Esophagus muscularis mucosa (tissue), 4 donors: ENCODE measurements at regions of chr5 and their contacts with region 1.

Region 1: GRCh38 chr5:172932313-172933017 is 26.8 kb upstream of the RPL26L1 start:
- DNase-seq: no peak
- H3K4me3 ChIP-seq: no peak overlapping the region
- H3K27ac ChIP-seq: peak overlapping the region; percentile 72 to 76 (median 74)
- H3K4me1 ChIP-seq: peaks cover 18 to 27% (median 25%) of the 10 kb centered on the region in 4 donors
- H3K27me3 ChIP-seq: no peaks in the 10 kb centered on the region
- CTCF ChIP-seq: peak; percentile 97 to 99 (median 97)
- EP300 ChIP-seq: no peak
- POLR2A ChIP-seq: no peak

Region 2: DNA sequence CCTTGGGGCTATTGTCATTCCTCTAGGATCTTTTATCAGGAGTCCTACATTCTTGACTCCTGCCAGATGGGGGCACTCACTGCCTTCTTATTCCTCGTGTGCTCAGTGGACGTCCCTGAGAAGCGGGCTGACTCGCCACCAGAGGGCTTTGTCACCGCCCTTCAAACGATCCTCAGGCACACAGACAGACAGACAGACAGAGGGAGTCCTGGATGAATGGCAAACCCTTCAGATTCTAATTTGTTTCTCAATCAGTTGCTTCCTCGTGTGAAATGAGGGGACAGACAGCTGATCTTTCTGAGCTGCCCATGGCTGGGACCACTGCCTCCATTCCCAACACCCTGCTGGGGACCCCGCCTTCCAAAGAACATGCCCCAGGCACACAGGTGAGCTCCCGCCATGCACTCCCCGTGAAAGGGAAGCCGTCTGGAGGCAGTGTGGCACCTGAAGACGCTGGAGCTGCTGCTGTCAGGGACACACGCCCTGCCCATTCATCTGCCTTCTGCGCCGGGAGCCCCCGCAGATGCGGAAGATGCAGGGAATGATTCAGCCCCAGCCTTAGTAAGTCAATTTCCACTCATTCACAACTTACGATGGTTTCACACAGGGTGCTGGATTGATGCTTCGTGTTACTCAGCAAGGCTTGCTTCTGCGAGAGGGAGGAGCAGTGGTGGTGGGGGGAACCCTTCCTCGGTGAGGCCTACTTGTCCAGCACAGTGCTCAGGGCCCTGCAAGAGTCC is 453.3 kb before region 1 on chr5:
- intact Hi-C with region 1: loop called (anchors 10 kb)
- DNase-seq: no peak
- H3K4me3 ChIP-seq: no peak overlapping the region
- H3K27ac ChIP-seq: peak overlapping the region; percentile 44 to 58 (median 44)
- H3K4me1 ChIP-seq: peaks cover 9 to 14% (median 9%) of the 10 kb centered on the region in 4 donors
- H3K27me3 ChIP-seq: no peaks in the 10 kb centered on the region
- CTCF ChIP-seq: peak; percentile 78 to 98 (median 80)
- EP300 ChIP-seq: no peak
- POLR2A ChIP-seq: no peak

Region 3: GRCh38 chr5:172714491-172715421 is 217.7 kb before region 1 on chr5:
- intact Hi-C with region 1: loop called (anchors 1 kb)
- DNase-seq: peak; percentile 95
- H3K4me3 ChIP-seq: no peak overlapping the region
- H3K27ac ChIP-seq: peak overlapping the region; percentile 67 to 75 (median 70)
- H3K4me1 ChIP-seq: peaks cover 39 to 57% (median 48%) of the 10 kb centered on the region in 4 donors
- H3K27me3 ChIP-seq: no peaks in the 10 kb centered on the region
- CTCF ChIP-seq: peak; percentile 77 to 97 (median 84)
- EP300 ChIP-seq: peak; percentile 29
- POLR2A ChIP-seq: no peak

Region 4: GRCh38 chr5:172727551-172727950 is 204.9 kb before region 1 on chr5:
- intact Hi-C with region 1: no loop called
- DNase-seq: no peak
- H3K4me3 ChIP-seq: no peak overlapping the region
- H3K27ac ChIP-seq: no peak overlapping the region
- H3K4me1 ChIP-seq: peaks cover 17 to 26% (median 20%) of the 10 kb centered on the region in 4 donors
- H3K27me3 ChIP-seq: no peaks in the 10 kb centered on the region
- CTCF ChIP-seq: no peak
- EP300 ChIP-seq: no peak
- POLR2A ChIP-seq: no peak